ENCODE measurements at regions of chr1 and their contacts with region 1.

Region 1: DNA sequence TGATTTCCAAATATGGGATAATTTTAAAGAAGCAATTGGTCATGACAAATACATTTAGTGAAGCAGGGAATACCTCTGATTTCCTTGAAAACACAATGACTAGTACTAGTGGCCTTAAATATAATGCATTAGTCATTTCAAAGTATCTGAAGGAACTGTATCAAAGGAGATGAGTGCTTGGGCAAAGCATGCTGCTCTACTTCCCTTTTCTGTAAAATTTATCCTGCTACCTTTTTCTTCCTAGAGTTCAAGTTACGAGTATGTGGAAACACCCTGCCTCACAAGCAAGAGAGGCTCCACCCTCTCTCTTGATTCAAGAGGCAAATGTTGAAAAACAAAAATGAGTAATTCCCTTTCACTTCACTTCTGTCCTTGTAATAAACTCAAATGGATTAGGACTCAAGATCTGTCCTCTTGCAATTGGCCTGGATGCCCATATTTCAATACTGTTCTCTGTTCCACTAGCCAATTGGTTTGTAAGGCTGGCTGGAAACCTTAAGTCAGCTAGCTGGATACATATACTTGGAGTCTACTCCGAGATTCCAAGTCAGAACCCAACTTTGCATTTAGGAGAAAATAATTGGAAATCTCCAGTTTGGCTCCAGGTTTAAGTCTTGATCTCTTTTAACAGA is 92.5 kb downstream of the CDC42BPA start:
- DNase-seq: peak; percentile 89
- H3K4me3 ChIP-seq: no peak overlapping the region
- H3K27ac ChIP-seq: peak overlapping the region; percentile 3
- H3K4me1 ChIP-seq: peaks cover 6% of the 10 kb centered on the region
- H3K27me3 ChIP-seq: no peaks in the 10 kb centered on the region
- CTCF ChIP-seq: no peak

Region 2: DNA sequence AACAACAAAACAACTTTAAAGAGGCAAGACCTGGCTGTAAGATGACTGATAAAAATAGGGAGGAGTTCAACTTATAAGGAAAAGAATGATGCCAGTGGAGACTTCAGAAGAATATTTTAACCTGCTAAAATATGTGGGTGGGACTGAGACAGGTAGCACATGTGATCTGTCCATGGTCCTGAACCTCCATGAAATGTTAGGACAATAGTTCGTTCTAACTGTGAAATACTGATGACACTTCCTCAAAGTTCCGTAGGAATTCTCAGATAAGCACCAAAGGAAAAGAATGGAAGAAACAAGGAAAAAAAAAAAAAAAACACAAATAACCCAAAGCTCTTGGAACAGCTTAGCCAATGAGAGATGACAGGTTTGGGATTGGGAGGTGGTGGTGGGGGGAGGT is 47.7 kb after region 1 on chr1:
- CTCF ChIA-PET with region 1: no interaction called
- dilution Hi-C with region 1: no loop called
- in situ Hi-C with region 1: no loop called
- intact Hi-C with region 1: loop called (anchors 5 kb)
- DNase-seq: peak; percentile 45
- H3K4me3 ChIP-seq: no peak overlapping the region
- H3K27ac ChIP-seq: no peak overlapping the region
- H3K4me1 ChIP-seq: no peaks in the 10 kb centered on the region
- H3K27me3 ChIP-seq: no peaks in the 10 kb centered on the region
- CTCF ChIP-seq: no peak

Region 3: DNA sequence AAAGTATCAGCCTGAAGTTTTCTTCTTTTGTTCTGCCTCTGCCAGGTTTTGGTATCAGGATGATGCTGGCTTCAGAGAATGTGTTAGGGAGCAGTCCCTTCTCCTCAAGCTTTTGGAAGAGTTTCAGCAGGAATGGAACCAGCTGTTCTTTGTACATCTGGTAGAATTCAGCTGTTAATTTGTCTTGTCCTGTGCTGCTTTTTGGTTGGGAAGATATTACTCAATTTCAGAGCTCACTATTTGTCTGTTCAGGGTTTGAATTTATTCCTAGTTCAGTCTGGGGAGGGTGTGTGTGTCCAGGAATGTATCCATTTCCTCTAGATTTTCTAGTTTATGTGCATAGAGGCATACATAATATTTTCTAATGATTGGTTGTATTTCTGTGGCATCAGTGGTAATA is 350.4 kb after region 1 on chr1:
- CTCF ChIA-PET with region 1: no interaction called
- dilution Hi-C with region 1: no loop called
- in situ Hi-C with region 1: no loop called
- intact Hi-C with region 1: no loop called
- DNase-seq: no peak
- H3K4me3 ChIP-seq: no peak overlapping the region
- H3K27ac ChIP-seq: no peak overlapping the region
- H3K4me1 ChIP-seq: no peaks in the 10 kb centered on the region
- H3K27me3 ChIP-seq: no peaks in the 10 kb centered on the region
- CTCF ChIP-seq: no peak

Measured in mammary epithelial cell (primary cell).